ENCODE measurements at regions of chr12 and their contacts with region 1.

Region 1: DNA sequence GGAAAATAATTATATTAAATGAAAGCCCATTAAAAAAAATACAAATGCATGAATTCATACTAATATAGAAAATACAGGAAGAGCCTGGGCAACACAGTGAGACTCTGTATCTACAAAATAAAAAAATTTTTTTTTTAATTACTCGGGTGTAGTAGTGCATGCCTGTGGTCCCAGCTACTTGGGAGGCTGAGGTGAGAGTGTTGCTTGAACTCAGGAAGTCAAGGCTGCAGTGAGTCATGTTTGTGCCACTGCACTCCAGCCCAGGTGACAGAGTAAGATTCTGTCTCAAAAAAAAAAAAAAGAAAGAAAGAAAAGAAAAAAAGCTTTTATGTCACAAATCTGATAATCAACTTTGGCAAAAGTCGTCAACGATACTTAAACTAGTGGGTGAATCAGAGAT is 80.6 kb upstream of the PLEKHA5 start:
- DNase-seq: no peak
- ATAC-seq: no peak
- H3K4me3 ChIP-seq: no peak overlapping the region
- H3K27ac ChIP-seq: no peak overlapping the region
- H3K4me1 ChIP-seq: no peaks in the 10 kb centered on the region
- H3K27me3 ChIP-seq: no peaks in the 10 kb centered on the region
- CTCF ChIP-seq: no peak

Region 2: DNA sequence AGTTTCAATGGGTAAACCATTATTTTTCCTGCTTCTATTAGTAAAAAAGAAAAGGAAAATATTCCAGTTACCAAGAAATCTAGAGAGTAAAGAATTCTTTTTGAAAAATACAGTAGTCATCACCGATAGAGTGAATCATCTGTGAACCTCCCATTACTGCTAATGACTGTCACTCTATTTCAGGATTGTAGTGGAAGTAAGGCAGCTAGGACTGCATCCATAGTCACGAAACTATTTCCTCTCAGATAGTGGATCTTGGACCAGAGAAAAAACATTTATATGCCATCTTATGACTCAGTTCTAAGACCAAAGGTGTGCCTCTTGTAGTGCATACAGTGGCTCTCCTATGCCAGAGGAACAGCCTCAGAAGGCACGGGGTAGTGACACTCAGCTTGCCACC is 93.3 kb before region 1 on chr12:
- intact Hi-C with region 1: no loop called
- DNase-seq: no peak
- ATAC-seq: peak in 1 of 8 donors; percentile 31
- H3K4me3 ChIP-seq: no peak overlapping the region
- H3K27ac ChIP-seq: no peak overlapping the region
- H3K4me1 ChIP-seq: peaks cover 0 to 18% (median 0%) of the 10 kb centered on the region in 9 donors
- H3K27me3 ChIP-seq: no peaks in the 10 kb centered on the region
- CTCF ChIP-seq: no peak

Region 3: GRCh38 chr12:19181666-19182426 is 132.9 kb after region 1 on chr12:
- intact Hi-C with region 1: loop called in 1 of 10 experiments (anchors 5 kb)
- DNase-seq: no peak
- ATAC-seq: no peak
- H3K4me3 ChIP-seq: no peak overlapping the region
- H3K27ac ChIP-seq: peak overlapping the region in 6 of 10 donors; percentile 4 to 57 (median 34)
- H3K4me1 ChIP-seq: peaks cover 2 to 64% (median 28%) of the 10 kb centered on the region in 9 donors
- H3K27me3 ChIP-seq: no peaks in the 10 kb centered on the region
- CTCF ChIP-seq: peak in 5 of 9 donors; percentile 13 to 34 (median 25)

Region 4: DNA sequence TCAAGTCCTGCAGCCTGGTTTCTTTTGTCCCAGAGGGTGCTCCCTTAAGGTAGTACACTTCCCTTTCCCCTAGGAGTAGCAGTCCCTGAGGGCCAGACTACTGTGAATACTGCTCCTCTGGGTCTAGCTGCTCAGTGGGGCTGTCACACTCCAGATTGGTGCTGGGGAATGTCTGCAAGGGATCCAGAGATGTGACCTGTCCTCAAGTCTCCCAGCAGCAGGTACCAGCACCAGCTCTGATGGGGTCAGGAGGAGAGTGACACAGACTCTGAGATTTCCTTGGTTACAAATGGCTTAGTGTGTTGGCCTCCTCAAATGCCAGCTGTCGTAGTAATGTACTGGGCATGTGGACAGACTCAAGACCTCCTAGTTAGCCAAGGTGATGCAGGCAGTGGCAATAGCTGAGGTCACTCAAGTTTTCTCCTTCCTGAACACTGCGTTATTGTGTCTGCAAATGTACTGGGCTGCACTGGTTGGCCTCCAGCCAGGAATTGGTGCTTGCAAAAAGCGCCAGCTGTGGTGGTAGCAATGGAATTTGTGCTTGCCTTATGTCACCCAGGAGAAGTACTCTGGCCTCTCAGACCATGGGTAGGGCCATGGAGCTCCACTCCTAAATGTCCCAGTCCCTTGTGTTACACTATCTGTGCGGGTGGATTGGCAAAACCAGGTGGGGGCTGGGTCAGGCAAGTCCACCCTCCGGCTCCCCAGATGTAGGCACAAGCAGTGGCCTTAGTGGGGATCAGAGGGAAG is 354.0 kb after region 1 on chr12:
- intact Hi-C with region 1: no loop called
- DNase-seq: peak; percentile 12 to 36
- ATAC-seq: peak in 6 of 8 donors; percentile 45 to 87 (median 82)
- H3K4me3 ChIP-seq: no peak overlapping the region
- H3K27ac ChIP-seq: no peak overlapping the region
- H3K4me1 ChIP-seq: peaks cover 0 to 11% (median 0%) of the 10 kb centered on the region in 9 donors
- H3K27me3 ChIP-seq: no peaks in the 10 kb centered on the region
- CTCF ChIP-seq: no peak

Measured in heart right ventricle (tissue), 16 donors.